AG04449 (cell line): ENCODE measurements at regions of chr12 and their contacts with region 1.

Region 1: DNA sequence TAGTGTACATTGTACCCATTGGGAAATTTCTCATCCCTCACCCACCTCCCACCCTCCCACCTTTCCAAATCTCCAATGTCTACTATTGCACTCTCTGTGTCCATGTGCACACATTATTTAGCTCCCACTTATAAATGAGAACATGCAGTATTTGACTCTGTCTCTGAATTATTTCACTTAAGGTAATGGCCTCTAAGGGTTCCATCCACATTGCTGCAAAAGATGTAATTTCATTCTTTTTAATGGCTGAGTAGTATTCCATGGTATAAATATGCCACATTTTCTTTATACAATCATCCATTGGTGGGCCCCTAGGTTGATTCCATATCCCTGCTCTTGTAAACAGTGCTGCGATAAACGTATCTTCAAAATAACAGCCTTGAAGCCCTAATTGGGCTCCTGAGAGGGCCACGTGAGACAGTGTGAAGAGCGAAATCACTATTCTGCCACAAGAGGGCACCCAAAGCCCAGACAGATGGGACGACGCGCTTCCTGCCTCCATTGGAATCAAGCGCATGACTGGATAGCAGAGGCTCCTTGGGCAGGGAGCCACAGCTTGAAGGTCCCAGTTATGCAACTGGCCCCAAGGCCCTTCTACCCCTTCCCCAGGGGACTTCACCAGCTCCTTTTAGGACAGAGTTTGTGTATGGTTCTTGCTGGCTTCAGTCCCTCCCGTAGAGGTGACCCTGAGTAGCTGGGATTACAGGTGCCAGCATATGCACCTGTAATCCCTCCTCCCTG is 21.3 kb upstream of the CD27 start:
- DNase-seq: peak; percentile 68
- H3K4me3 ChIP-seq: no peak overlapping the region
- CTCF ChIP-seq: peak; percentile 78

Region 2: GRCh38 chr12:6323340-6323994 is 100.0 kb before region 1 on chr12:
- CTCF ChIA-PET with region 1: interaction called, 13 read pairs
- POLR2A ChIA-PET with region 1: interaction called, 3 read pairs
- DNase-seq: peak; percentile 76
- H3K4me3 ChIP-seq: 0 out of 2 replicates have a peak overlapping the region, but pooled peaks have one; percentile 8
- CTCF ChIP-seq: peak; percentile 46

Region 3: DNA sequence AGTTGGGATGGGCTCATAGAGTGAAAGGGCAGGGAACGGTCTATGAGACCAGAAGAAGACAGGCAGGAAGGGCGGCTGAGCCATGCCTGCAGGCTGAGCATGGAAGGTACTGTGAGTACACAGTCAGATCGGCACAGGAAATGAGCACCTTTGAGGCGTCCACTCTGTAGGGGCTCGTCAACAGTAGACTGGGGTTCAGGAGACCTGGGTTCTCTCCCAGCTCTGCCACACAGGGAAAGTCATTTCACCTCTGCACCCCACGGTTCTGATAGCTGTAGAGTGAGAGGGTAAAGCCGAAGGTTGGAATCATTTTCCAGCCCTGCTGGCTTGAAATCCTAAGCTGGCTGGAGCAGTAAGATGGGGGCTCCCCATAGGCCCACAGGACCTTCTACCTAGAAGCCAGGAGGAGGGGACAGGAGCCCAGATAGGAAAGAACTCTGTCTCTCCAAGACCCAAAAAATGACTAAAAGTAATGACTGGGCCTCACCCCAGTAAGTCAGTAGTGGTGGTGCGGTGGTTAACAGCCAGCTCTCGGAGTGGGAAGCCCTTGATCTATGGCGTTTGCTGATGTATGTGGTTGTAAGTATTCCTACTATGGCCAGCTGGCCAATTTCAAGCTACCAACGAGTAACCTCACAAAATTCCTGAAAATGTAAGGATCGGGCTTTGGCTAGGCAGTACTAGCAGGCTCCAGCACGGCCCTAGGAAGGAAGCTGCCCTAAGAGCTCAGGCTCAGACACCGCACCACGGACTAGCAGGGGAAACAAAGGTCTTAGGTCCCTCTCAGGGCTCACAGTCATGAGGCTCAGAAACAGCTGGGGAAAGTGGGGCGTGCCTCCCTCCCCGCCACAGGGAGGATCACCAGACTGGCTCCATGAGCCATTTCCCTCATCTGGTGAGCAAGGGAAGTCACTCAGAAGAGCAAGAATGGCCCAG is 11.0 kb after region 1 on chr12:
- CTCF ChIA-PET with region 1: interaction called, 16 read pairs
- POLR2A ChIA-PET with region 1: no interaction called
- DNase-seq: no peak
- H3K4me3 ChIP-seq: no peak overlapping the region
- CTCF ChIP-seq: no peak

Region 4: GRCh38 chr12:6540181-6540877 is 116.9 kb after region 1 on chr12:
- CTCF ChIA-PET with region 1: interaction called, 18 read pairs
- POLR2A ChIA-PET with region 1: interaction called, 7 read pairs
- DNase-seq: no peak
- H3K4me3 ChIP-seq: peak overlapping the region; percentile 10; the same call in 1 of the 2 replicates
- CTCF ChIP-seq: peak; percentile 7

Region 5: DNA sequence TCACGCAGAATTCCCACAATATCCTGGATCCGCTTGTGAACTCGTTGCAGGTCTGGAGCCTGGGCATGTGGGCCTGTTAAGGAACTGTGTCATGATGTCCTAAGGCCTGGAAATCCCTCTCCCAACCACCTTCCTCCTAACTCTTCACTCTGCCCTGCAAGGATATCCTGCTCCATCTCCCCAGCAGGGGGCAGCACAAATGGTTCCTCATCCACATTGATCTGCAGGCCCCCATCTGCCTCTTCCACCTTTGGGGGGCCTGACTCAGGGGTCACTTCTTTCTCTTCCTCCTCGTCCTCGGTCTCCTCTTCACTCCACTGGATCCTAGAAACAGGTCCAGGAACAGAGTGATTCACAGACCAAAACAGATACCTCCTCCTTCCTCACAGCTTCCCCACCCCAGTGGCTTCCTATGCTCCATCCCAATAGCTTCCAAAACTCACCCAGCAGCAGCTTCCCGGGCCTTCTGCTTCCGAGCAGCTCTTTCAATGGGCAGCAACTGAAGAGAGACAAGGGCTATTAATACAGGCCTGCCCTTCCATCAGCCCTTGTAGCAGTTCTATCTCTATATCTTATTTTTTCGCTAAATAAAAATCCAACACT is 140.1 kb after region 1 on chr12:
- CTCF ChIA-PET with region 1: interaction called, 28 read pairs
- POLR2A ChIA-PET with region 1: no interaction called
- DNase-seq: no peak
- H3K4me3 ChIP-seq: no peak overlapping the region
- CTCF ChIP-seq: peak; percentile 84

Region 6: GRCh38 chr12:7122811-7123769 is 699.7 kb after region 1 on chr12:
- CTCF ChIA-PET with region 1: no interaction called
- POLR2A ChIA-PET with region 1: no interaction called
- DNase-seq: no peak
- H3K4me3 ChIP-seq: no peak overlapping the region
- CTCF ChIP-seq: no peak